ENCODE measurements at regions of chr18 and their contacts with region 1.

Region 1: GRCh38 chr18:7872569-7872968 is 305.5 kb downstream of the PTPRM start:
- DNase-seq: peak; percentile 89
- H3K4me3 Mint-ChIP-seq: peak overlapping the region; percentile 62
- H3K27ac Mint-ChIP-seq: peak overlapping the region; percentile 96
- H3K4me1 Mint-ChIP-seq: peaks cover 38% of the 10 kb centered on the region
- H3K27me3 Mint-ChIP-seq: no peaks in the 10 kb centered on the region
- CTCF ChIP-seq: peak; percentile 15

Region 2: GRCh38 chr18:7566567-7567473 is 305.7 kb before region 1 on chr18 and contains the start of gene PTPRM:
- CTCF ChIA-PET with region 1: interaction called, 3 read pairs
- POLR2A ChIA-PET with region 1: interaction called, 14 read pairs
- intact Hi-C with region 1: loop called (anchors 2 kb)
- DNase-seq: peak; percentile 79
- H3K4me3 Mint-ChIP-seq: peak within 1 kb of the TSS; percentile 81
- H3K27ac Mint-ChIP-seq: peak within 1 kb of the TSS; percentile 59
- H3K4me1 Mint-ChIP-seq: peaks cover 35% of the 10 kb centered on the region
- H3K27me3 Mint-ChIP-seq: no peaks in the 10 kb centered on the region
- CTCF ChIP-seq: peak; percentile 45
- total RNA-seq, gene PTPRM: 82.8 and 107 TPM in 2 replicates

Region 3: DNA sequence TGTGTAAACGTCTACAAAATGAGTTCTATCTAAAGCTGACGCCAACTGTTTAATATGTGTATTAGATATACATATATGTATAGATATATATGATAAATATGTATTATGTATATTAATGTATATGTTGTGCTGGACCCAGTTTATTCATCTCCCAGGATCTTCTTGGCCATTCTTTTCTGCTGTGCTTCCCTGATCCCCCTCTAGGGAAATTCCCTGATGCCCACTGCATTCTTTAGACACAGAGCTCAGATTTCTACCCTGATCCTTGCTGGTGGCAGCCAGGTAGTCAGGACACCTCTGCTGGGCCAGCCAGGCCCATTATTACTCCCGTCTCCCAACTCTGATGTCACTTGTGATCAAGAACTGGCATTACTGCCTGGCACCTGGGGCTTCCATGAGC is 13.4 kb before region 1 on chr18:
- CTCF ChIA-PET with region 1: interaction called, 11 read pairs
- POLR2A ChIA-PET with region 1: interaction called, 11 read pairs
- intact Hi-C with region 1: no loop called
- DNase-seq: no peak
- H3K4me3 Mint-ChIP-seq: no peak overlapping the region
- H3K27ac Mint-ChIP-seq: no peak overlapping the region
- H3K4me1 Mint-ChIP-seq: peaks cover 33% of the 10 kb centered on the region
- H3K27me3 Mint-ChIP-seq: no peaks in the 10 kb centered on the region
- CTCF ChIP-seq: no peak

Region 4: DNA sequence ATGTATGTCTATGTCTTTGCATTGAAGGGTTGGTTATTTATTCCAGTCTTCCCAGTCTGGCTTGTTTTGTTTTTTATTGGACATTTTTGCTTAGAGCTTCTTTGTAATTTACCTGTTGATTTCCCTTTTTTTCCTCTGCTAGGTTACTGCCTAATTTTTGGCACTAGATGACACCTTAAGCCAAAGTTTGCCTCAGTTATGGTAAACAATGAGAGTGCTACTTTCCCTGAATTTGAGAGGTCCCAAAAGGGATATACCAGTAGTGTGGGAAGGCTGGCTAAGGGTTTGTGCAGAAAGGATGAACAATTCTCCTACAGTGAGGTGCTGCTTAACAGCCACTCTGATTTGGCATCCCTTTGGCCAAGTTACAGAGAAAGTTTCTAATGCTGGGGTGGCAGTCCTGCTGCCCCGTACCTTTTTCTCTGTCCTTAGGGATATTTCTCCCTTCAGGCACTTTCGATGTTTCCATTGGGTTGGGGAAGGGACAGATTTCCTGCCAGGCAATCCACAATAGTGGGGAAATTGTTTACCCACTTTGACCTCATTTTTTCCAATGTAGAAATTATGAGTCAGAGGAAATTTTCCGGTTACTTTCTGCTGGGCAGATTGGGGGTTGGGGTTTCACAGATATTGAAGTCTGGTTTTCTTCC is 49.5 kb after region 1 on chr18:
- CTCF ChIA-PET with region 1: no interaction called
- POLR2A ChIA-PET with region 1: interaction called, 19 read pairs
- intact Hi-C with region 1: loop called (anchors 5 kb)
- DNase-seq: peak; percentile 93
- H3K4me3 Mint-ChIP-seq: peak overlapping the region; percentile 60
- H3K27ac Mint-ChIP-seq: peak overlapping the region; percentile 96
- H3K4me1 Mint-ChIP-seq: peaks cover 65% of the 10 kb centered on the region
- H3K27me3 Mint-ChIP-seq: no peaks in the 10 kb centered on the region
- CTCF ChIP-seq: no peak

Region 5: GRCh38 chr18:7946734-7947377 is 74.3 kb after region 1 on chr18:
- CTCF ChIA-PET with region 1: interaction called, 6 read pairs
- POLR2A ChIA-PET with region 1: interaction called, 10 read pairs
- intact Hi-C with region 1: loop called (anchors 2 kb)
- DNase-seq: peak; percentile 60
- H3K4me3 Mint-ChIP-seq: peak overlapping the region; percentile 66
- H3K27ac Mint-ChIP-seq: peak overlapping the region; percentile 82
- H3K4me1 Mint-ChIP-seq: peaks cover 54% of the 10 kb centered on the region
- H3K27me3 Mint-ChIP-seq: no peaks in the 10 kb centered on the region
- CTCF ChIP-seq: no peak

Region 6: GRCh38 chr18:8045884-8046281 is 173.3 kb after region 1 on chr18:
- CTCF ChIA-PET with region 1: no interaction called
- POLR2A ChIA-PET with region 1: no interaction called
- intact Hi-C with region 1: loop called (anchors 10 kb)
- DNase-seq: peak; percentile 28
- H3K4me3 Mint-ChIP-seq: no peak overlapping the region
- H3K27ac Mint-ChIP-seq: no peak overlapping the region
- H3K4me1 Mint-ChIP-seq: peaks cover 22% of the 10 kb centered on the region
- H3K27me3 Mint-ChIP-seq: no peaks in the 10 kb centered on the region
- CTCF ChIP-seq: no peak